ENCODE measurements at regions of chr14 and their contacts with region 1.

Region 1: DNA sequence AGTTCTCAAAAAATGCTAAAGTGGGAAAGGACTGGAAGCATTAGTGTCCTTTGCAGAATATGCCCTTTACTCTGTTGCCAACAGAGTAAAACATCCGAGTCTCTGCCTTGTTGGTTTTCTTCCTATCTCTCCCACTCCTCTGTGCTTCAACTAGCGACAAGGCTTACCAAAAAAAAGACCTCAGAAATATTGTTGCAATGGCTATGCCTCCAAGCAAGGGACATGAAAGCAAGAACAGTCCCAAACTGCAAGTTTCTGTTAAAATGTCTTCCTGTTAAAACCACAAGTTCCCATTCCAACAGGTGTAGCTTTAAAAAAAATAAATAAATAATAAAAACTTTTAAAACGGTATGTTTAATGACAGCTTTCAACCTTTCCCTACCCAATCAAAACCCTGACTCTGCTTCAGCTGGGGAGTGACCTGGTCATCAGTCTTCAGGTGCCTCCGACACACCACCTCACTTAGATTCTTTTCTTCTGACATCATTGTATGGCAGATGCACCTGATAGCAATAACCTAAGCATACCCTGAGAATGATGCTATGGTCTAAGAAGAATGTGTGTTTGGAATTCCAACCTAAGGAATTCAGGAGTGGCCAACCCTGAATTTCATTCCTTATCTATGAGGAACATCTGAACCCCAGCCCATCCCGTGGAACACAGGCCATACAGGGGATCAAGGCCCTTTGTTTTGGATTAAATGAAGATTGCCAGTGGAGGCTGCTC is 81.0 kb downstream of the RPS29 start:
- DNase-seq: no peak
- ATAC-seq: no peak
- H3K4me3 Mint-ChIP-seq: no peak overlapping the region
- H3K27ac Mint-ChIP-seq: no peak overlapping the region
- H3K4me1 Mint-ChIP-seq: no peaks in the 10 kb centered on the region
- H3K27me3 Mint-ChIP-seq: peaks cover 9% of the 10 kb centered on the region

Region 2: GRCh38 chr14:49249022-49249421 is 256.2 kb before region 1 on chr14:
- CTCF ChIA-PET with region 1: no interaction called
- POLR2A ChIA-PET with region 1: no interaction called
- intact Hi-C with region 1: no loop called
- DNase-seq: no peak
- ATAC-seq: no peak
- H3K4me3 Mint-ChIP-seq: no peak overlapping the region
- H3K27ac Mint-ChIP-seq: no peak overlapping the region
- H3K4me1 Mint-ChIP-seq: no peaks in the 10 kb centered on the region
- H3K27me3 Mint-ChIP-seq: peaks cover 2% of the 10 kb centered on the region

Region 3: DNA sequence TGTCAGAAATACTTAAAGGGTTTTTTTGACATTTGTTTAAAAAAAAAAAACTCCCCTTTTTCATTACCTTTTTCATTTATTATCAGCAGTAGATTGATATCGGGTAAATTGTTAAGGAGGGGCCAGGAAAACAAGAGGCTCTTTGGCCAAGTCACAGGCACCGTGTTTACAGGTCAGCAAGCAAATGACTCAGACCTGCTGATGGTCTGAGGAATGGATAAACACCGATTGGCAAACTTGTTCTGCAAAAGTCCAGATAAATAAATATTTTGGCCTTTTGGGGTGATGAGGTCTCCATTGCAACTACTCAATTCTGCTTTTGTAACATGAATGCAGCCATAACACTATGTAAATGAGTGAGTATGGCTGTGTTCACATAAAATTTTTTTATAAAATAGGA is 13.1 kb before region 1 on chr14:
- CTCF ChIA-PET with region 1: interaction called, 3 read pairs
- POLR2A ChIA-PET with region 1: interaction called, 12 read pairs
- intact Hi-C with region 1: no loop called
- DNase-seq: no peak
- ATAC-seq: no peak
- H3K4me3 Mint-ChIP-seq: no peak overlapping the region
- H3K27ac Mint-ChIP-seq: no peak overlapping the region
- H3K4me1 Mint-ChIP-seq: no peaks in the 10 kb centered on the region
- H3K27me3 Mint-ChIP-seq: peaks cover 3% of the 10 kb centered on the region